ENCODE measurements at regions of chr9 and their contacts with region 1.

Region 1: DNA sequence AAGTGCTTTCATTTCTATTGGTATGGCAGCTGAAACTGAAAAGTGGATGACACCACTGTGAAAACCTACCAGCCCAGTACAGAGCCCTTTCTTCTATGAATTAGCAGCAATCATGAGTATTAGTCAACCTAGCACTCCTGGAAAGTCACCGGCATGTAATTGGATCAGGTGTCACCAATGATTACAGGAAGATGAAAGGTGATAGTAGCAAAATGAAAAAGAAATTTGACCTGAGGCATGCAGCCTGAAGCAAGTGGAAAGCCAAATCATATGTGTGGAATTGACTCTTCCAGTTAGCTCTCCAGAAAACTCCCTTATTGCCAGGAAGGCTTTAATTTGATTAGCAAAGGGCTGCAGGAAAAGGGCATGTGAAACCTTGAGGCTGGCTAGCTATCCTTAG is 81.2 kb upstream of the NAA35 start:
- DNase-seq: no peak
- ATAC-seq: no peak
- H3K4me3 ChIP-seq: no peak overlapping the region
- H3K27ac ChIP-seq: no peak overlapping the region
- H3K4me1 ChIP-seq: no peaks in the 10 kb centered on the region
- H3K27me3 ChIP-seq: no peaks in the 10 kb centered on the region
- CTCF ChIP-seq: no peak

Region 2: GRCh38 chr9:85871008-85871407 is 11.2 kb after region 1 on chr9:
- intact Hi-C with region 1: no loop called
- DNase-seq: no peak
- ATAC-seq: no peak
- H3K4me3 ChIP-seq: no peak overlapping the region
- H3K27ac ChIP-seq: no peak overlapping the region
- H3K4me1 ChIP-seq: no peaks in the 10 kb centered on the region
- H3K27me3 ChIP-seq: no peaks in the 10 kb centered on the region
- CTCF ChIP-seq: no peak

Region 3: DNA sequence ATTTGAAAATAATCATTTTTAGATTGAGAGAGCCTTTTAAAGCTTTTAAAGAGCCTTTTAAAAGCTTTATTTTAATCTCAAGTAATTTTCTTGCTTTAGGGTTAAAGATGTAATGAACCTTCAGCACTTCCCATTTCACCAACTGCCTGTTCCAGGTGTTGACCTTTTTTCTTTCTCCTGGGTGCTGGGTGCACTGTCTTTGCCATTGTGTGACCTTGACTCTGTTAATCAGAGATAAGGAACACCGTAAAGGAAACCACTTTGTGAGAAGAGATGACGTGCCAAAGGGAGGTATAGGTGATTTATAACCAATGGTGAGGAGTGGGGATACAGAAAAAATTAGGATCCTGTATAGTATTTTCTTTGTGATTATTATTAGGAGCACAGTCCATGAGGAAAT is 149.4 kb after region 1 on chr9:
- intact Hi-C with region 1: loop called in 1 of 10 experiments (anchors 10 kb)
- DNase-seq: no peak
- ATAC-seq: no peak
- H3K4me3 ChIP-seq: no peak overlapping the region
- H3K27ac ChIP-seq: no peak overlapping the region
- H3K4me1 ChIP-seq: no peaks in the 10 kb centered on the region
- H3K27me3 ChIP-seq: no peaks in the 10 kb centered on the region
- CTCF ChIP-seq: no peak

Region 4: GRCh38 chr9:86187121-86187520 is 327.4 kb after region 1 on chr9:
- intact Hi-C with region 1: no loop called
- DNase-seq: no peak
- ATAC-seq: no peak
- H3K4me3 ChIP-seq: no peak overlapping the region
- H3K27ac ChIP-seq: no peak overlapping the region
- H3K4me1 ChIP-seq: peaks cover 0 to 6% (median 0%) of the 10 kb centered on the region in 9 donors
- H3K27me3 ChIP-seq: no peaks in the 10 kb centered on the region
- CTCF ChIP-seq: no peak

Measured in heart right ventricle (tissue), 16 donors.